Ascending aorta (tissue), 2 donors: ENCODE measurements at regions of chr11 and their contacts with region 1.

Region 1: GRCh38 chr11:2151500-2152257 is 9.3 kb downstream of the INS start:
- DNase-seq: peak in 1 of 2 donors; percentile 86
- H3K4me3 ChIP-seq: no peak overlapping the region
- H3K27ac ChIP-seq: no peak overlapping the region
- H3K4me1 ChIP-seq: peaks cover 0 to 5% of the 10 kb centered on the region in 2 donors
- H3K27me3 ChIP-seq: peaks cover 4% of the 10 kb centered on the region
- CTCF ChIP-seq: peak; percentile 84 to 89 (median 85)

Region 2: DNA sequence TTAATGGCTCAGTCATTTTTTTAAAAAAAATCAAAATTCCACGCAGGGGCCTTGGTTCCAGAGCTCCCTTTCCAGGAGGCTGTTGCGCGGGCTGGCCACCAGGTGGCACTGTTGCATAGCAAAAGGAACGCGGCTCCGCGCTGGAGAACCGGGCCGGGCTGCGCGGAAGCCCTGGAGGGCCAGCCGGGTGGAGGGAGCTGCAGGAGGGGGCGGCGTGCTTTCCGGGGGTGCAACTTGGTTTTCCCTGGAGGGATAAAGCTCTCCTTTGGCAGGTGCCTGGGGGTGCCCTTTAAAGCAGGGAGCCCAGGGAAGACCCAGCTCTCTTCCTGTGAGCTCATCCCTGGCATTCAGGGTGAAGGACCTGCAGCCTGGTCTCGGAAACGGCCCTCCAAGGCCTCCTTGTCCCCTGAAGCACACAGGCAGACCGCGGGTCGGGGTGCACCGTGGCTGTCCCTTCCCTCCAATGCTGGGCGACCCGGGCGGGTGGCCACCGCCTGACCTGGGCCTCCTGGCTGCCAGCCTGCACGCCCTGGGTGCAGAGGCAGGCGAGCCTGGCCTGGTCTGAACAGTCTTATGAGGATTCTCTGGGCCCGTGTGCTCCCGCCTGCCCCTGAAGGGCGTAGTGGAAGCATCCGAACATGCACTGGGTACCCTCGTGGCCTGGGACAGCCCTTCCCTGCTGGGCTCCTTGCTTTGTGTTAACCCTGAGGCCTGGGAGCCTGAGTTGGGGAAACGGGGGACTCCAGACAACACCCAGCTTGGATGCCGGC is 498.7 kb before region 1 on chr11:
- intact Hi-C with region 1: loop called (anchors 1 kb)
- DNase-seq: peak in 1 of 2 donors; percentile 83
- H3K4me3 ChIP-seq: no peak overlapping the region
- H3K27ac ChIP-seq: no peak overlapping the region
- H3K4me1 ChIP-seq: no peaks in the 10 kb centered on the region
- H3K27me3 ChIP-seq: no peaks in the 10 kb centered on the region
- CTCF ChIP-seq: peak; percentile 92 to 99 (median 96)

Region 3: DNA sequence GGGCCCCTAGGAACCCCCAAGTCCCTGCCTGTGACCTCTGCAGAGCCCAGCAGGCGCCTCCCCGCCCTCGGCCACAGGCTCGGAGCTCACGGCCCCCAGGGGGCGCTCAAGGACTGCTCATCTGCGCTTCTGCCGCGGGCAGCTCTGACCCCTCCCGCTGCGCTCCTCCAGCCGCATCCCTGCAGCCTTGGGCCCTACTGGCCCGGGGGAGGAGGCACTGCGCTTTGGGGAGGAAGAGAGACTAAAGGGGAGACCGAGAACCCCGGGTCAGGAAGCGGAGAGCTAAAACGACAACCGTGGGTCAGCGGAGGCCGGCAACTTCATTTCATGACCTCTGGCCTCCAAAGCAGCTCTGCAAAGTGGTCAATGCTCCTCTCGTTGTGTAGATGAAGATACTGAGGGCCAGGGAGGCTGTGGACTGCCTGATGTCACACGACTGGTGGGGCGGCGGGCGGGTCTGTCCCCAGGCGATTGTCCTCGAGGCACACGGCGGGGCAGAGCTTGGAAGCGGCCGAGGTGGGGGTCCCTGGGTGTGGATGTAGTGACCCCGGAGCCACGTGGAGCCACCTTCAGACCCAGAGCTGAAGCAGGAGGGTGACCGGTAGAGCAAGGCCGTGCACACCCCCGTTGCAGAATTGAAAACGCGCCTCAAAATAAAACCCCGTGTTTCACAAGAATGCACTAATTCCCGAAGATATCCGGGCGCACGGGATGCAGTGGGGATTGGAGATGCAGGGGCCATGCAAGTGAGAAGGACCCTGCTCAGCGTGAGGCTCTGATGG is 457.4 kb before region 1 on chr11:
- intact Hi-C with region 1: loop called (anchors 1 kb)
- DNase-seq: peak in 1 of 2 donors; percentile 90
- H3K4me3 ChIP-seq: peak overlapping the region; percentile 35 to 41
- H3K27ac ChIP-seq: peak overlapping the region in 1 of 2 donors; percentile 72
- H3K4me1 ChIP-seq: peaks cover 4 to 8% of the 10 kb centered on the region in 2 donors
- H3K27me3 ChIP-seq: no peaks in the 10 kb centered on the region
- CTCF ChIP-seq: peak; percentile 86 to 95 (median 95)

Region 4: DNA sequence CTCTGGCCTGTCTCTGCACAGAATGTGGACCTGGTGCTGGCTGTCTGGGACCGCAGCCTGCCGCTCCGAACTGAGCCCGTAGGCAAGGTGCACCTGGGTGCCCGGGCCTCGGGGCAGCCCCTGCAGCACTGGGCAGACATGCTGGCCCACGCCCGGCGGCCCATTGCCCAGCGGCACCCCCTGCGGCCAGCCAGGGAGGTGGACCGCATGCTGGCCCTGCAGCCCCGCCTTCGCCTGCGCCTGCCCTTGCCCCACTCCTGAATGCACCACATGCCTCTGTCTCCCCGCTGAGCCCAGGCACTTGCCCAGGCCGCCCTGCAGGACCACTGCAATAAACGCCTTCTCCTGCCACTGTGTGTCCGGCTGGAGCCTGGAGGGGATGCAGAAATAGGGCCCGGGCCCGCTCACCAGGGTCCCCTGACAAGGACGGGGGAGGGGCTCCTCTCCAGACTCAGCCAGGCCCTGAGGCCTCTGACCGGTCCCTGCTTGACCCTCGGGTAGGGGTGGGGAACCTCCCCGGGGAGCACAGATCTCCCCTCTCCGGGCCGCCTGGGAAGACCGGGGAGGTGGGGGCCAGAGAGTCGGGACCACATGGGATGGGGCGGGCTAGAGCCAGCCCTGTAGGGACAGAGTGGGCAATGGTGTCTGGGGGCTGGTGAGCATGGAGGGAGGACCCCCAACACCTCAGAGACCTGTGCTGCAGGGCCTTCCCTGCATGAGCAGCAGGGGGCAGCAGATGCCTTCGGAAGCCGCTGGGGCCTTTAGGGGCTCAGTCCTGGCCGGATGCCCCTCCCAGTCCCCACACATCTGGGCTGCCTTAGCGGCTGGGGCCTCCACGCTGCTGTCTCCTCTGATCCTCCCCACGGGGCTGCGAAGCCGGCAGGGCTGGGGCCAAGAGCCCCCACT is 314.3 kb before region 1 on chr11:
- intact Hi-C with region 1: loop called (anchors 1 kb)
- DNase-seq: no peak
- H3K4me3 ChIP-seq: no peak overlapping the region
- H3K27ac ChIP-seq: no peak overlapping the region
- H3K4me1 ChIP-seq: peaks cover 4% of the 10 kb centered on the region in 2 donors
- H3K27me3 ChIP-seq: no peaks in the 10 kb centered on the region
- CTCF ChIP-seq: peak; percentile 82 to 93 (median 91)

Region 5: GRCh38 chr11:1882519-1883238 is 269.0 kb before region 1 on chr11:
- intact Hi-C with region 1: loop called (anchors 5 kb)
- DNase-seq: peak in 1 of 2 donors; percentile 84
- H3K4me3 ChIP-seq: no peak overlapping the region
- H3K27ac ChIP-seq: peak overlapping the region; percentile 87 to 91
- H3K4me1 ChIP-seq: peaks cover 4 to 25% of the 10 kb centered on the region in 2 donors
- H3K27me3 ChIP-seq: no peaks in the 10 kb centered on the region
- CTCF ChIP-seq: peak; percentile 74 to 92 (median 90)

Region 6: GRCh38 chr11:2128130-2128510 is 23.6 kb before region 1 on chr11:
- intact Hi-C with region 1: no loop called
- DNase-seq: no peak
- H3K4me3 ChIP-seq: no peak overlapping the region
- H3K27ac ChIP-seq: no peak overlapping the region
- H3K4me1 ChIP-seq: no peaks in the 10 kb centered on the region
- H3K27me3 ChIP-seq: no peaks in the 10 kb centered on the region
- CTCF ChIP-seq: no peak